ENCODE measurements at regions of chr7 and their contacts with region 1.

Region 1: DNA sequence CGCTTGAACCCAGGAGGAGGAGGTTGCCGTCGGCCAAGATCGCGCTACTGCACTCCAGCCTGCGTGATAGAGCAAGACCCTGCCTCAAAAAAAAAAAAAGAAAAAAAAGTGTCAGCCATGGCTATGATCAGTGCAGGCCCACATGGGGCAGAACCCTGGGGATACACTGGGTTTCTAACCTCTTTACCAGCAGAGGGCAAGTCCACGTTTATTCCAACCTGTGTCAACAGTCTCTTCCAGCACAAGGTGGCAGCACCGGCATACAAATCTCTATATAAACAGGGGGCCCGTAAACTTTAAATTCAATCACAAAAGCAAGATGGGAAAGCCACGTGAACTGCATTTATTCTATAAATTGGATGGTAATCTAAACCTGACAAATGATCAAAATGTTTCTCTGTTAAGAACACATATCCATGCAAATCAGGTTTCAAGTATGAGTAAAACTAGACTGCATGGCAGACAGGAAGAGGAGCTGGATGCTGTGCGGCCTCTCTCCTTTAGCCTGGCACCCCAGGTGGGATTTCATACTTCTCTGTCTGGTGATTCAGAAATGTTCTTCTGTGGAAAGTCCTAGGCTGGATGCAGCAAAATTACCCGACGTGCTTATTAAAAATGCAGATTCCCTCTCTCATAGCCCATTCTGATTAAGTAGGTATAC is 60.0 kb upstream of the STEAP1B start:
- DNase-seq: peak; percentile 75 to 88 (median 80)
- ATAC-seq: peak; percentile 83
- H3K4me3 ChIP-seq: no peak overlapping the region
- H3K27ac ChIP-seq: no peak overlapping the region
- H3K4me1 ChIP-seq: peaks cover 15 to 36% of the 10 kb centered on the region in 2 experiments
- H3K27me3 ChIP-seq: no peaks in the 10 kb centered on the region
- CTCF ChIP-seq: peak; percentile 91 to 99 (median 99)
- EP300 ChIP-seq: no peak
- POLR2A ChIP-seq: no peak
- RAD21 ChIP-seq: peak; percentile 92 to 95

Region 2: DNA sequence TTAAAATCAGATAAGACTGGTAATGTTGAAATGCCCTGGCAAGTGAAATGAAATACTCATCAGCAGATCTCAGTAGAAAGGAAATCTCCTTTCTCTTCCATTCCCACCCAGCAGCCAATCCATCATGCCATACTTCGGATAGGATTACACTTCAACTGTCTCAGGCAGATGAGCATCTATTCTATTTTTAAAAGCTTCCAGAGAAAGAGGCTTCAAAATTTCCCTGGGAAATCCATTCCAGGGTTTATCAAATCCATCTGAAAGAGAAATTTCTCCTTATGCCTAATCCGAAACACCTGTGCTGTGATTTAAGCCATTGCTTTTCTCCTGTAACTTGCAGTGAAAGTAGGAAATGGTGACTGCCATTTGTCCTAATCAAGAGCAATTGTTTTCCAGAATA is 142.6 kb before region 1 on chr7:
- CTCF ChIA-PET with region 1: no interaction called
- POLR2A ChIA-PET with region 1: no interaction called
- in situ Hi-C with region 1: no loop called
- intact Hi-C with region 1: no loop called
- DNase-seq: no peak
- ATAC-seq: no peak
- H3K4me3 ChIP-seq: no peak overlapping the region
- H3K27ac ChIP-seq: no peak overlapping the region
- H3K4me1 ChIP-seq: no peaks in the 10 kb centered on the region
- H3K27me3 ChIP-seq: no peaks in the 10 kb centered on the region
- CTCF ChIP-seq: no peak
- EP300 ChIP-seq: no peak
- POLR2A ChIP-seq: no peak
- RAD21 ChIP-seq: no peak

Region 3: GRCh38 chr7:22499044-22499443 is 60.9 kb before region 1 on chr7:
- CTCF ChIA-PET with region 1: no interaction called
- POLR2A ChIA-PET with region 1: no interaction called
- in situ Hi-C with region 1: no loop called
- intact Hi-C with region 1: no loop called
- DNase-seq: peak in 1 of 4 experiments; percentile 33
- ATAC-seq: no peak
- H3K4me3 ChIP-seq: peak overlapping the region; percentile 50
- H3K27ac ChIP-seq: peak overlapping the region; percentile 79; the same call in 2 of the 3 replicates
- H3K4me1 ChIP-seq: peaks cover 2 to 4% of the 10 kb centered on the region in 2 experiments; a peak in 4 of 5 replicates
- H3K27me3 ChIP-seq: no peaks in the 10 kb centered on the region
- CTCF ChIP-seq: no peak
- EP300 ChIP-seq: no peak
- POLR2A ChIP-seq: no peak
- RAD21 ChIP-seq: no peak

Region 4: DNA sequence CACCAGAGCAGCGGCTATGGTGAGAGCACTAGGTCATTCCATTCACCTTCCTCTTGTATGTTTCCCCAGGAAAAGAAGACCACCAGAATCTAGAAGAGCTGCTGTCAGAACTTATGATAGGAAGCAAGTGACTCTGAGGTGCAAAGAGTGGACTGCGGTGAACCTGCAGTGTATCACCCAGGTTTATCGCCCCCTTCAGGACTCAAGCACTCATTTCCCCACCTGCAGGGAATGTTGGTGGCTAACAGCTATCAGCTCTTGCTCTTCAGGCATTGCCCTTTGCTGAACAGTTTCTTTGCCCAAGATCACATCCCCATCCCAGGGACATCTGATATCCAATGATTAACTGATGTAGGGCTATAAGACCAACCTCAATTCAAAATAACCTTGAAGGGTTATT is 100.8 kb after region 1 on chr7:
- CTCF ChIA-PET with region 1: no interaction called
- POLR2A ChIA-PET with region 1: interaction called, 3 read pairs
- in situ Hi-C with region 1: no loop called
- intact Hi-C with region 1: loop called (anchors 5 kb)
- DNase-seq: peak in 3 of 4 experiments; percentile 37 to 63 (median 54)
- ATAC-seq: peak; percentile 79
- H3K4me3 ChIP-seq: no peak overlapping the region
- H3K27ac ChIP-seq: no peak overlapping the region
- H3K4me1 ChIP-seq: peaks cover 13 to 31% of the 10 kb centered on the region in 2 experiments; a peak in 4 of 5 replicates
- H3K27me3 ChIP-seq: no peaks in the 10 kb centered on the region
- CTCF ChIP-seq: peak; percentile 60 to 71 (median 64)
- EP300 ChIP-seq: no peak
- POLR2A ChIP-seq: no peak
- RAD21 ChIP-seq: peak in 1 of 2 experiments; percentile 42; a peak in 2 of 4 replicates

Region 5: GRCh38 chr7:22677680-22678079 is 117.7 kb after region 1 on chr7:
- CTCF ChIA-PET with region 1: no interaction called
- POLR2A ChIA-PET with region 1: no interaction called
- in situ Hi-C with region 1: no loop called
- intact Hi-C with region 1: loop called (anchors 5 kb)
- DNase-seq: no peak
- ATAC-seq: no peak
- H3K4me3 ChIP-seq: no peak overlapping the region
- H3K27ac ChIP-seq: peak overlapping the region; percentile 48
- H3K4me1 ChIP-seq: peaks cover 12 to 84% of the 10 kb centered on the region in 2 experiments
- H3K27me3 ChIP-seq: no peaks in the 10 kb centered on the region
- CTCF ChIP-seq: no peak
- EP300 ChIP-seq: no peak
- POLR2A ChIP-seq: no peak
- RAD21 ChIP-seq: no peak

Region 6: GRCh38 chr7:22782616-22783232 is 222.8 kb after region 1 on chr7:
- CTCF ChIA-PET with region 1: interaction called, 13 read pairs
- POLR2A ChIA-PET with region 1: interaction called, 3 read pairs
- in situ Hi-C with region 1: no loop called
- intact Hi-C with region 1: loop called (anchors 1 kb)
- DNase-seq: peak; percentile 79 to 86 (median 83)
- ATAC-seq: peak; percentile 99
- H3K4me3 ChIP-seq: no peak overlapping the region
- H3K27ac ChIP-seq: no peak overlapping the region
- H3K4me1 ChIP-seq: peaks cover 0 to 5% of the 10 kb centered on the region in 2 experiments; a peak in 1 of 5 replicates
- H3K27me3 ChIP-seq: no peaks in the 10 kb centered on the region
- CTCF ChIP-seq: peak; percentile 88 to 96 (median 91)
- EP300 ChIP-seq: no peak; the same call in 1 of the 2 replicates
- POLR2A ChIP-seq: no peak
- RAD21 ChIP-seq: peak; percentile 78 to 87

Region 7: GRCh38 chr7:22854158-22855048 is 294.4 kb after region 1 on chr7:
- CTCF ChIA-PET with region 1: no interaction called
- POLR2A ChIA-PET with region 1: interaction called, 6 read pairs
- in situ Hi-C with region 1: no loop called
- intact Hi-C with region 1: loop called (anchors 10 kb)
- DNase-seq: peak; percentile 95 to 96 (median 96)
- ATAC-seq: peak; percentile 85
- H3K4me3 ChIP-seq: peak overlapping the region; percentile 56
- H3K27ac ChIP-seq: peak overlapping the region; percentile 90
- H3K4me1 ChIP-seq: peaks cover 17 to 31% of the 10 kb centered on the region in 2 experiments
- H3K27me3 ChIP-seq: no peaks in the 10 kb centered on the region
- CTCF ChIP-seq: peak in 1 of 3 experiments; percentile 40; a peak in 1 of 6 replicates
- EP300 ChIP-seq: no peak
- POLR2A ChIP-seq: peak; percentile 84
- RAD21 ChIP-seq: 0 out of 4 replicates have a peak, but pooled peaks of 1 of the 2 experiments have one; percentile 13

Region 8: GRCh38 chr7:23072048-23072447 is 512.1 kb after region 1 on chr7:
- CTCF ChIA-PET with region 1: interaction called, 3 read pairs
- POLR2A ChIA-PET with region 1: no interaction called
- in situ Hi-C with region 1: loop called (anchors 5 kb)
- intact Hi-C with region 1: loop called (anchors 5 kb)
- DNase-seq: peak in 1 of 4 experiments; percentile 40
- ATAC-seq: peak; percentile 80
- H3K4me3 ChIP-seq: no peak overlapping the region
- H3K27ac ChIP-seq: no peak overlapping the region
- H3K4me1 ChIP-seq: peaks cover 0 to 20% of the 10 kb centered on the region in 2 experiments; a peak in 3 of 5 replicates
- H3K27me3 ChIP-seq: no peaks in the 10 kb centered on the region
- CTCF ChIP-seq: peak; percentile 34 to 66 (median 53); a peak in 4 of 6 replicates
- EP300 ChIP-seq: no peak
- POLR2A ChIP-seq: no peak
- RAD21 ChIP-seq: peak; percentile 58 to 79

Measured in K562 (cell line).